Sigmoid colon (tissue), 7 donors: ENCODE measurements at regions of chr1 and their contacts with region 1.

Region 1: GRCh38 chr1:178385662-178386061 is 111.1 kb downstream of the CLEC20A start:
- DNase-seq: no peak
- H3K4me3 ChIP-seq: no peak overlapping the region
- H3K27ac ChIP-seq: no peak overlapping the region
- H3K4me1 ChIP-seq: peaks cover 0 to 23% (median 15%) of the 10 kb centered on the region in 4 donors
- H3K27me3 ChIP-seq: no peaks in the 10 kb centered on the region
- CTCF ChIP-seq: no peak
- EP300 ChIP-seq: no peak
- POLR2A ChIP-seq: no peak

Region 2: DNA sequence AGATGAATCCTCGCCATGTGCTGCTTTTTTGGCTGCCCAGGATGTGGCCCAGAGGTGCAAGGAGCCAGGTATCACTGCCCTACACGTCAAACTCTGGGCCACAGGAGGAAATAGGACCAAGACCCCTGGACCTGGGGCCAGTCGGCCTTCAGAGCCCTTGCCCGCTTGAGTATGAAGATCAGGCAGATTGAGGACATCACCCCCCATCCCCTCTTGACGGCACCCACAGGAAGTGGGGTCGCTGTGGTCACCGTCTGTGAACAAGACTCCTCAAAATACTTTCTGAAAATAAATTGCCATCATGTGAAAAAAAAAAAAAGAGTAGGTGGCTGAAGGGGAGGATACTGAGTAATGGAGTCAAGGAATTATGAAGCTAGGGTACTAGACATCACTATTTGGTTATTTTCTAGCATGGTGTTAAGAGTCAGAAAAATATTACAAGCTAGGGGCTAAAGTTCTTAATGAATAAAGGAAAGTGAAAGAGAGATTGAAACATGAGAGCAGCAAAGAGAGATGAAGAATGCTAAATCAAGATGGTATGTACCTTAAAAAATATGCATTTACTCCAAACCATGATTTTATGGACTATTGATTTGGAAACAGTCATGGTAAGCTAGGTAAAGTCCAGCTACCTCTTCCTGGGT is 26.2 kb after region 1 on chr1:
- intact Hi-C with region 1: loop called (anchors 2 kb)
- DNase-seq: no peak
- H3K4me3 ChIP-seq: no peak overlapping the region
- H3K27ac ChIP-seq: no peak overlapping the region
- H3K4me1 ChIP-seq: peaks cover 0 to 12% (median 4%) of the 10 kb centered on the region in 4 donors
- H3K27me3 ChIP-seq: no peaks in the 10 kb centered on the region
- CTCF ChIP-seq: no peak
- EP300 ChIP-seq: no peak
- POLR2A ChIP-seq: no peak